IMR-90 (cell line): ENCODE measurements at regions of chr11 and their contacts with region 1.

Region 1: GRCh38 chr11:63938479-63939396 is at the start of gene NAA40:
- DNase-seq: peak; percentile 94
- ATAC-seq: peak; percentile 98
- H3K4me3 ChIP-seq: peak within 1 kb of the TSS; percentile 90
- H3K27ac ChIP-seq: peak within 1 kb of the TSS; percentile 81
- H3K4me1 ChIP-seq: no peaks in the 10 kb centered on the region
- H3K27me3 ChIP-seq: no peaks in the 10 kb centered on the region
- CTCF ChIP-seq: 0 out of 2 replicates have a peak, but pooled peaks have one; percentile 5
- POLR2A ChIP-seq: no peak
- RAD21 ChIP-seq: no peak
- total RNA-seq, gene NAA40: 8.9 and 15.2 TPM in 2 replicates

Region 2: DNA sequence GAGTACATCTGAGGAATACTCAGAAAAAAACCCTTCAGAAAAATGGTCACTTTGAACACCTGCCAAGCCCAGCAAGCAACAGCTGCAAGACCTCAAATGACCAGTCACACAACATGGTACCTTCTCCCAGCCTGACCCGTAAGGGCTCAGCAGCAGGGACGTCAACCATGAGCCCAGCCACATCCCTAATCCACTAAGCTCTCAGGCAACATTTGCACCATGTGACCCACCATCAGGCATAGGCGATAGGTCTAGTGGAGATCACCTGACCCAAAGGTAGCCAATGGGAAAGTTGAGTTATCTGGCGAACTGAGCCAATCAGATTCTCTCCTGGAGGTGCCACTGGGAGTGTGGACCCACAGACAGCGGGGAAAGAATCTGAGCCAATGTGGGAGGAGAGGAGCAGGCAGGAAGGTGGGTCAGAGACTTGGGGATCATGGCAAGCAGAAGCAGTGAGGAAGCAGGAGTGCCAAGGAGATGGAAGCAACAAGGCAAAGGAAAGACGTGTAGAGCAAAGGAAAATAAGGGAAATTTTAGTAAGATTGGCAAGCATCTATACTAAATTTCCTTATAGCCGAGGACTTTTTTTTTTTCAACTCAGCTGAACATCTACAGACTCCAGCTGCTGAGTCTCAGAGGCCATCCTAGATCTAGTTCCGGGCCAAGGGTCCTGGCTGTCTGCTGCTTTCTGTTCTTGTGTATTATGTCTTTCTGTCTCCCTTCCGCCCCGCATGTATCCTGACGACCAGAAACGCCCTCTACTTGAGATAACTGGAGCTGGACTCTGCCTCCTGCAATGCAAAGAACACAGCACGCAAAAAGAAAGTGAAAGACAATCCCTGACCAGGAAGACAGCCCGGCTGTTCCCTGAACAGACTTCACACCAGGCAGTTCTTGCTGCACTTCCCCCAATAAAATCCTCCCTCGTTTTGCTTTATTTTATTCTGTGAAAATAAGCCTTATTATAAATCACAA is 364.6 kb before region 1 on chr11:
- CTCF ChIA-PET with region 1: no interaction called
- POLR2A ChIA-PET with region 1: no interaction called
- dilution Hi-C with region 1: no loop called
- in situ Hi-C with region 1: no loop called
- intact Hi-C with region 1: no loop called
- DNase-seq: peak; percentile 85
- ATAC-seq: peak; percentile 99
- H3K4me3 ChIP-seq: peak overlapping the region; percentile 21; the same call in 1 of the 2 replicates
- H3K27ac ChIP-seq: peak overlapping the region; percentile 45; the same call in 1 of the 2 replicates
- H3K4me1 ChIP-seq: peaks cover 8% of the 10 kb centered on the region
- H3K27me3 ChIP-seq: no peaks in the 10 kb centered on the region
- CTCF ChIP-seq: peak; percentile 19; the same call in 1 of the 2 replicates
- POLR2A ChIP-seq: no peak
- RAD21 ChIP-seq: no peak

Region 3: DNA sequence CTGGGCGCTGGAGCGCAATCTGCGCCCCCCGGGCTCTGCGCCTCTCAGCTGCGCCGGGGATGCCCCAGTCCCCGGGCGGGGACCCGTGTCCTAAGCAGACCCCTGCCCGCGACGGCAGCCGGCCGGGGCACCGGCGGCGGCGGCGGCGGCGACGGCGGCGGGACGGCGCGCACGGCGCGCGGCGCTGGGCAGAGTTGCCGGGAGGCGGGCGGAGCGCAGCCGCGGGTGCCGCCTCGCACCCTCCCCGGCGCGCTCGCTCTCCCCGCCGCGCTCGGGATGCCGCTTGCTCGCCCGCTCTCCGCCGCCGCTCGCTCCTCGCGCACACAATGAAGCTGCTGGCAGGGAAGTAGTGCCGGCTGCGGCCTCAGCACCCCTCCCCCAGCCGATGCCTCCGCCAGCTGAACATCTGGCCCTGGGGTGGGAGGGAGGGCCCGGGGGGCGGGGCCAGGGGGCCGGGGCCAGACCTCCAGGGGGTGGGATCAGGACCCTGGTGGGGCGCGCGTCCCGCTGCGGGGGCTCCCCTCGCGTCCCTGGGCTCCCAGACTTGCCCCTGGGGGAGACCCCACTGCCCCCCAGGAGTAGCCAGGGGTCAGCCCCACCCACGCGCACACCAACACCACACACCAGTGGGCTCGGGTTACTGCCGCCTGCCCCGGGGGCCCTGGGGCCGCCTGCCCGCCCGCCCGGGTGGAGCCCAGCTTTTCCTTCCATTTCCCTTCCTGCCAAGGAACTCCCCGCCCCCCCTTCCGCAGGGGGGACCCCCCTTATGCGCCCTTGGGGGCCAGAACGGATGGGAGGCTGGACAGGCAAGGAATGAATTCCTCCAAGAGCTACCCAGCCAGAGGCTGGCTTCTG is 21.7 kb before region 1 on chr11 and contains the start of gene RCOR2:
- CTCF ChIA-PET with region 1: interaction called, 3 read pairs
- POLR2A ChIA-PET with region 1: interaction called, 3 read pairs
- dilution Hi-C with region 1: no loop called
- in situ Hi-C with region 1: no loop called
- intact Hi-C with region 1: loop called (anchors 2 kb)
- DNase-seq: peak; percentile 80
- ATAC-seq: peak; percentile 77
- H3K4me3 ChIP-seq: peak within 1 kb of the TSS; percentile 36
- H3K27ac ChIP-seq: peak within 1 kb of the TSS; percentile 22
- H3K4me1 ChIP-seq: peaks cover 31% of the 10 kb centered on the region
- H3K27me3 ChIP-seq: peaks cover 7% of the 10 kb centered on the region; the same call in 1 of the 2 replicates
- CTCF ChIP-seq: no peak
- POLR2A ChIP-seq: no peak
- RAD21 ChIP-seq: no peak
- total RNA-seq, gene RCOR2: 0.56 and 0.90 TPM in 2 replicates

Region 4: DNA sequence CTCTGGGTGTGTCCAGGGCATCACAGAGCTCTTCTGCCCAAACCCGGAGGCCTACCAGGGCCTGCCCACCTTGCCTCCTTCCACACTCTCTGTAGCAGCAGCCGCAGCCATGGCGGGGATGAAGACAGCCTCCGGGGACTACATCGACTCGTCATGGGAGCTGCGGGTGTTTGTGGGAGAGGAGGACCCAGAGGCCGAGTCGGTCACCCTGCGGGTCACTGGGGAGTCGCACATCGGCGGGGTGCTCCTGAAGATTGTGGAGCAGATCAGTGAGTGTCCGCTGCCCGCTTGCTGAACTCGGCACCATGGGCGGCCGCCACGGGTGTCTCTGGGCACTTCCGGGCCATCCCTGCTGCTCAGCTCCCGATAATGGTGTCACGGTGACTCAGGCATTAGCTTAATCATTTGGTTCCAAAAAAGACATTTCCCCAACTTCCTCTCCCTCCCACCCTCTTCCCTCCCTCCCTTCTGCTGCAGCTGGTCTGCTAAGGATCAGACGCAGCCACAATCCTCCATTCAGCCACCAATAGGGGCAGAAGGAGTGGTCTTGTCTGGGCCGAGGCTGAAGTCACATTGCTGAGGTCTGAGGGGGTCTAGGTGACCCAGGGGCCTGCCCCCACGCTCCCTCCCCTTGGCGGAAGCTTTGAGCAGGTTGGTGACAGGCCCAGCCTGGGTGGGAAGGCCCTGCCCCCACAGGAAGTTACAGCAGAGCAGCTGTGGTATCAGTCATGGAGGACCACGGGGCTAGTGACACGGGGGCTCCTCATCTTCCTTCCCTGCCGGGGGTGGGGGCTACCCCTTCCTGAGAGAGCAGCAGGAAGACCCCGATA is 268.7 kb after region 1 on chr11:
- CTCF ChIA-PET with region 1: no interaction called
- POLR2A ChIA-PET with region 1: no interaction called
- dilution Hi-C with region 1: no loop called
- in situ Hi-C with region 1: no loop called
- intact Hi-C with region 1: no loop called
- DNase-seq: peak; percentile 78
- ATAC-seq: peak; percentile 60
- H3K4me3 ChIP-seq: no peak overlapping the region
- H3K27ac ChIP-seq: peak overlapping the region; percentile 62
- H3K4me1 ChIP-seq: peaks cover 10% of the 10 kb centered on the region
- H3K27me3 ChIP-seq: no peaks in the 10 kb centered on the region
- CTCF ChIP-seq: no peak
- POLR2A ChIP-seq: no peak
- RAD21 ChIP-seq: no peak